CD14-positive monocyte (primary cell): ENCODE measurements at regions of chr9 and their contacts with region 1.

Region 1: GRCh38 chr9:114930056-114930812 is at the start of gene TNFSF8:
- DNase-seq: peak; percentile 77 to 83 (median 82)
- H3K4me3 ChIP-seq: peak within 1 kb of the TSS; percentile 82 to 91 (median 88)
- H3K4me3 Mint-ChIP-seq: peak within 1 kb of the TSS; percentile 93 to 99
- H3K27ac ChIP-seq: peak within 1 kb of the TSS; percentile 92 to 94
- H3K27ac Mint-ChIP-seq: peak within 1 kb of the TSS; percentile 97 to 100 (median 98)
- H3K4me1 ChIP-seq: peaks cover 28 to 41% of the 10 kb centered on the region in 2 donors
- H3K4me1 Mint-ChIP-seq: peaks cover 34% of the 10 kb centered on the region
- H3K27me3 ChIP-seq: no peaks in the 10 kb centered on the region
- H3K27me3 Mint-ChIP-seq: peaks cover 0 to 2% (median 0%) of the 10 kb centered on the region in 3 donors
- CTCF ChIP-seq: no peak
- polyA plus RNA-seq, gene TNFSF8: 27.8 to 42.9 (median 34.0) TPM

Region 2: DNA sequence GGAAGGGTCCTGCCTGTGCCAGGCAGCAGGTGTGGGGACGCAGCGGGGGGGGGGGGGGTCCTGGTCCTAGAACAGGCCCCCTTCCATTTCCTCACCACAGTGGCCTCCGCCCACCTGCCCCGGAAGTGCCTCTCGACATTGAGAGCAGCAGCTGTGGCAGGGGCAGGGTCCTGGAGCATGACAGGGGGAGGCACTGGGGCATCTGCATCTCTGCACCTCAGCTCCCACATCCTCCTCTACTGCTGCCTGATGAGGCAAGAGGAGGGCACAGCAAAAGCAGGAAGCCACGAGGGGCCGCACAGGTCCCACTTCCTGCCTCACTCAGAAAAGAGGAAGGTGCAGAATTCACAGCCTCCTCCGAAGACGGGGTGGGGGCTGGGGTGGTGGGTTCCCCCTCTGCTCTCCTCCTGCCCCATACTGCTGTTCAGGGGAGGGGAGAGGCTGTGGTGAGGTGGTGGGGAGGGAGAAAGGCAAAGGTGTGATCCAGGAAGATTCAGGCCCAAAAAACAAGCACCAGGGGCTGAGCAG is 557.2 kb before region 1 on chr9:
- intact Hi-C with region 1: no loop called
- DNase-seq: peak; percentile 89 to 95 (median 93)
- H3K4me3 ChIP-seq: peak overlapping the region in 2 of 3 experiments; percentile 7 to 66
- H3K4me3 Mint-ChIP-seq: peak overlapping the region; percentile 69 to 88
- H3K27ac ChIP-seq: peak overlapping the region; percentile 85 to 86
- H3K27ac Mint-ChIP-seq: peak overlapping the region; percentile 97 to 99 (median 98)
- H3K4me1 ChIP-seq: peaks cover 94 to 98% of the 10 kb centered on the region in 2 donors
- H3K4me1 Mint-ChIP-seq: peaks cover 89% of the 10 kb centered on the region
- H3K27me3 ChIP-seq: no peaks in the 10 kb centered on the region
- H3K27me3 Mint-ChIP-seq: no peaks in the 10 kb centered on the region
- CTCF ChIP-seq: no peak

Region 3: GRCh38 chr9:114587385-114588202 is 342.6 kb before region 1 on chr9 and contains the start of gene ATP6V1G1:
- intact Hi-C with region 1: no loop called
- DNase-seq: peak; percentile 99 to 100 (median 99)
- H3K4me3 ChIP-seq: peak within 1 kb of the TSS; percentile 67 to 89 (median 87)
- H3K4me3 Mint-ChIP-seq: peak within 1 kb of the TSS; percentile 96 to 99
- H3K27ac ChIP-seq: peak within 1 kb of the TSS; percentile 96
- H3K27ac Mint-ChIP-seq: peak within 1 kb of the TSS; percentile 97 to 100 (median 99)
- H3K4me1 ChIP-seq: peaks cover 48 to 55% of the 10 kb centered on the region in 2 donors
- H3K4me1 Mint-ChIP-seq: peaks cover 46% of the 10 kb centered on the region
- H3K27me3 ChIP-seq: no peaks in the 10 kb centered on the region
- H3K27me3 Mint-ChIP-seq: no peaks in the 10 kb centered on the region
- CTCF ChIP-seq: no peak
- polyA plus RNA-seq, gene ATP6V1G1: 146 to 226 (median 214) TPM

Region 4: DNA sequence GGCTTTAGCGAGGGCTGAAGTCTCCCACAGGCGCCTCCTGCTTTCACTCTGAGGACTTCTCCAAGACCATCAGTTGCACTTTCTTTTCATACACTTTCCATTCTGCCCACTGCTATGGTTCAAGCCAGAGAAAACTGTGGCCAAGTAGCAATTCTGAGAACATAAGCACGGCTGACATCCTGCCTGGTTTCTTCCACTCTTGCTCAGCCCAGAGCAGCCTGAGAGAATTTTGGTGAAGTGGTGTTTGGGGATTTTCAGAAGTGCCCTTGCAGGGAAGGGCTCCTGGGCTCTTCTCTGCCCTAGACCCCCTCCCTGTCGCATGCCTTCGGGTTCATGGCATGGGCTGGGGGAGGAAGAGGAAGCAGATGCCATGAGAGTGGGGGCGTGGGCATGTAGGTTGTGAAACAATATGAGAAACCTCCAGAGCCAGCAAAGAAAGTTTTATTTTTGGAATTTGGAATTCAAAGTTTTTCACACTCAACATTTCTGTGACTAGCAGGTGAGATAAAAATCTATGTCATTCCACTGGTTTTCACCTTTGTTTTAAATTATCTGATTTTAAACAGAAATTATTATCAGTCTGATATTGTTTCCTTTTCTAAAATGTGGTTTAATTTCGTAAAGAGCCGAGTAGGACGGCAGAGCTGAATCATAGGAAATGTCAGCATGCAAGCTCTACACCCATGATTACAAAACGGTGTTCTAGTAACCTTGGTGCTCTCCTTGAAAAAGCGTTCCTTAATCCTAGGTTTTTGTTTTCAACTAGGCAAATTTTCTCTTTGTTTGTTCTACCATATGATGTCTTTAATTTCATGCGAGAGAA is 28.0 kb after region 1 on chr9:
- intact Hi-C with region 1: no loop called
- DNase-seq: peak; percentile 95 to 98 (median 96)
- H3K4me3 ChIP-seq: peak overlapping the region in 2 of 3 experiments; percentile 2 to 52
- H3K4me3 Mint-ChIP-seq: peak overlapping the region; percentile 63 to 79
- H3K27ac ChIP-seq: peak overlapping the region; percentile 94 to 99
- H3K27ac Mint-ChIP-seq: peak overlapping the region; percentile 96 to 100 (median 99)
- H3K4me1 ChIP-seq: peaks cover 58 to 62% of the 10 kb centered on the region in 2 donors
- H3K4me1 Mint-ChIP-seq: peaks cover 65% of the 10 kb centered on the region
- H3K27me3 ChIP-seq: no peaks in the 10 kb centered on the region
- H3K27me3 Mint-ChIP-seq: peaks cover 0 to 9% (median 0%) of the 10 kb centered on the region in 3 donors
- CTCF ChIP-seq: no peak

Region 5: DNA sequence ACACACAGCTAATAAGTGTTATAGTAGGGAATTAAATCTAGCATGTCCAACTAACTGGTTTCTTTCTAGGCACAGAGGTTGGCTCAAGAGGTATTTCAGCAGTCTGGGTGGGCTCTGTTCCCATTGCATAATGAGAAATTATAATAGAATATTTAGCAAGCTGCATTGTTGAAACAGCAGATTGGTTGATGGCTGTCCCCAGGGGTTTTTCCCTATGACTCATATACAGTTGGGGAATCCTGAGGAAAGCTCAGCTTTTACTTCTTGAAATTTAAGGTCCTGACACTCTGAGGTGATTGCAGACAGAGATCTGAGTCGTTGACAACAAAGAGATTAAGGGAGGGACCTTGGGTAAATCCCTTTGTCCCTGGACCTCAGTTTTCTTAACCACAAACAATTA is 38.4 kb after region 1 on chr9:
- intact Hi-C with region 1: loop called in 1 of 2 experiments (anchors 2 kb)
- DNase-seq: peak; percentile 81 to 97 (median 96)
- H3K4me3 ChIP-seq: no peak overlapping the region
- H3K4me3 Mint-ChIP-seq: peak overlapping the region in 1 of 2 donors; percentile 42
- H3K27ac ChIP-seq: peak overlapping the region; percentile 55 to 91
- H3K27ac Mint-ChIP-seq: peak overlapping the region; percentile 83 to 96 (median 93)
- H3K4me1 ChIP-seq: peaks cover 21 to 33% of the 10 kb centered on the region in 2 donors
- H3K4me1 Mint-ChIP-seq: peaks cover 33% of the 10 kb centered on the region
- H3K27me3 ChIP-seq: no peaks in the 10 kb centered on the region
- H3K27me3 Mint-ChIP-seq: peaks cover 0 to 4% (median 0%) of the 10 kb centered on the region in 3 donors
- CTCF ChIP-seq: no peak

Region 6: DNA sequence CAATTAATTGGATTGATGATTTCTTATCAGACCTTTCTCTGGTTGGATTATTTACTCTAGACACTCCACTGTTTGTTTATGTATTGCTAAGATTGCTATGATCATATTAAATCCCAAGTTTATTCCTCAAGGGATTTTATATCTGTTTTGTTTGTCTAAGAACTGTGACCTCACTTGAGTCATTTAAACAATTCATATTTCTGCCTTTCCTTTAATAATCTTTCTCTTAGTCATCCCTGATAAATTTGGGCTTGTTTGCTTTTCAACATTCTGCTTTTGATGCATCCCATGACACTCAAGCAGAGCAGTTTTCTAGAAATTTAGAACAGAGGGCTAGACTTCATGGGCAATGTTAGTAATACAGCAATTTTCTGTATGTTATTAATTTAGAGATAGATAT is 419.3 kb after region 1 on chr9:
- intact Hi-C with region 1: no loop called
- DNase-seq: no peak
- H3K4me3 ChIP-seq: no peak overlapping the region
- H3K4me3 Mint-ChIP-seq: no peak overlapping the region
- H3K27ac ChIP-seq: no peak overlapping the region
- H3K27ac Mint-ChIP-seq: no peak overlapping the region
- H3K4me1 ChIP-seq: no peaks in the 10 kb centered on the region
- H3K4me1 Mint-ChIP-seq: no peaks in the 10 kb centered on the region
- H3K27me3 ChIP-seq: no peaks in the 10 kb centered on the region
- H3K27me3 Mint-ChIP-seq: no peaks in the 10 kb centered on the region
- CTCF ChIP-seq: no peak